Activated naive CD4-positive, alpha-beta T cell treated with anti-CD3 and anti-CD28 coated beads, Interleukin-2, amount 10 ng/mL, durations not matched to agents 7 days and 5 days (primary cell): ENCODE measurements at regions of chr19 and their contacts with region 1.

Region 1: GRCh38 chr19:11035441-11036377 is 53.6 kb upstream of the LDLR start:
- DNase-seq: peak; percentile 93
- H3K4me3 Mint-ChIP-seq: no peak overlapping the region
- H3K27ac Mint-ChIP-seq: peak overlapping the region; percentile 72
- H3K4me1 Mint-ChIP-seq: peaks cover 14% of the 10 kb centered on the region
- H3K27me3 Mint-ChIP-seq: no peaks in the 10 kb centered on the region

Region 2: DNA sequence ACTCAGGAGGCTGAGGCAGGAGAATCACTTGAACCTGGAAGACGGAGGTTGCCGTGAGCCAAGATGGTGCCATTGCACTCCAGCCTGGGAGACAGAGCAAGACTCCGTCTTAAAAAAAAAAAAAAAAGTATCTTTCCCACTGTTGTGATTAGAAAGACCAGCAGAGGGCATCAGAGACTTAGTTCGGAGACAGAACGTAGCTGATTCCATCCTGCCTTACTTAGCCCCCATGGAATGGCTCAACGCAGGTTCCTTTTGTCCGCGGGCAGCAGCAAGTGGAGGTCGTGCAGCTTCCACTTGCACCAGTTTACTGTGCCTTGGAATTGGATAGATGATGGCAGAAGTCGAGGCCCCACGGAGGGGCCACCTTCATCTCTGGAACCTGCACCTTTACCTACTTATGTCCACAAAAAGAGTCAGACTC is 99.0 kb before region 1 on chr19:
- CTCF ChIA-PET with region 1: interaction called, 14 read pairs
- DNase-seq: peak; percentile 49
- H3K4me3 Mint-ChIP-seq: no peak overlapping the region
- H3K27ac Mint-ChIP-seq: no peak overlapping the region
- H3K4me1 Mint-ChIP-seq: peaks cover 16% of the 10 kb centered on the region
- H3K27me3 Mint-ChIP-seq: no peaks in the 10 kb centered on the region

Region 3: DNA sequence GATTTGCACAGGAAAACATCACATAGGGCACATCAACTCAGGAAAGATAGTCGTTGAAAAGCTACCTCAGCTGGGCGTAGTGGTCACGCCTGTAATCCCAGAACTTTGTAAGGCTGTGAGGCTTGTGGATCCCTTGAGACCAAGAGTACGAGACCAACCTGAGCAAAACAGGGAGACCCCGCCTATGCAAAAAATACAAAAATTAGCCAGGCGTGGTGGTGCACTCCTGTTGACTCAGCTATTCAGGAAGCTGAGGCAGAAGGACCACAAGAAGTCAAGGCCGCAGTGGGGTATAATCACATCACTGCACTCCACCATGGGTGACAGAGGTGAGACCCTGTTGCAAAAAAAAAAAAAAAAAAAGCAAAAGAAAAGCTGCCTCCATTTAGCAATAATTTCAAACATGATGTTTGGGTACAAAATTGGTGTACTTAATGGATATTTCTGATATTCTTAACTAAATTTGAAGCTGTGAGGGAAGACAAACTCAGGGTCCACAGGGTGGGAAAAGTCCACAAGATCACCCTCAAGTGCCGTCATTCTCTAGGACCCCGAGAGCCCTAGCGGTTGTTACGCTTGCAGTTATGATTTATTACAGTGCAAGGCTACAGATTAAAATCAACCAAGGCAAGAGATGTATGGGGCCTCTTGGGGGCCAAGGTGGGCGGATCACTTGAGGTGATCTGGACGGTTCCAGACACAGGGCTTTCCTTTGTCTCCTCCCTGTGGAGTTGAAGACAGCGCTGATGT is 11.1 kb after region 1 on chr19:
- CTCF ChIA-PET with region 1: interaction called, 11 read pairs
- DNase-seq: no peak
- H3K4me3 Mint-ChIP-seq: no peak overlapping the region
- H3K27ac Mint-ChIP-seq: peak overlapping the region; percentile 52
- H3K4me1 Mint-ChIP-seq: peaks cover 35% of the 10 kb centered on the region
- H3K27me3 Mint-ChIP-seq: no peaks in the 10 kb centered on the region

Region 4: GRCh38 chr19:11093684-11094238 is 58.1 kb after region 1 on chr19:
- CTCF ChIA-PET with region 1: interaction called, 15 read pairs
- DNase-seq: no peak
- H3K4me3 Mint-ChIP-seq: peak overlapping the region; percentile 93
- H3K27ac Mint-ChIP-seq: peak overlapping the region; percentile 99
- H3K4me1 Mint-ChIP-seq: peaks cover 68% of the 10 kb centered on the region
- H3K27me3 Mint-ChIP-seq: no peaks in the 10 kb centered on the region

Region 5: GRCh38 chr19:11111117-11111774 is 75.5 kb after region 1 on chr19:
- CTCF ChIA-PET with region 1: interaction called, 11 read pairs
- DNase-seq: no peak
- H3K4me3 Mint-ChIP-seq: no peak overlapping the region
- H3K27ac Mint-ChIP-seq: no peak overlapping the region
- H3K4me1 Mint-ChIP-seq: no peaks in the 10 kb centered on the region
- H3K27me3 Mint-ChIP-seq: no peaks in the 10 kb centered on the region

Region 6: DNA sequence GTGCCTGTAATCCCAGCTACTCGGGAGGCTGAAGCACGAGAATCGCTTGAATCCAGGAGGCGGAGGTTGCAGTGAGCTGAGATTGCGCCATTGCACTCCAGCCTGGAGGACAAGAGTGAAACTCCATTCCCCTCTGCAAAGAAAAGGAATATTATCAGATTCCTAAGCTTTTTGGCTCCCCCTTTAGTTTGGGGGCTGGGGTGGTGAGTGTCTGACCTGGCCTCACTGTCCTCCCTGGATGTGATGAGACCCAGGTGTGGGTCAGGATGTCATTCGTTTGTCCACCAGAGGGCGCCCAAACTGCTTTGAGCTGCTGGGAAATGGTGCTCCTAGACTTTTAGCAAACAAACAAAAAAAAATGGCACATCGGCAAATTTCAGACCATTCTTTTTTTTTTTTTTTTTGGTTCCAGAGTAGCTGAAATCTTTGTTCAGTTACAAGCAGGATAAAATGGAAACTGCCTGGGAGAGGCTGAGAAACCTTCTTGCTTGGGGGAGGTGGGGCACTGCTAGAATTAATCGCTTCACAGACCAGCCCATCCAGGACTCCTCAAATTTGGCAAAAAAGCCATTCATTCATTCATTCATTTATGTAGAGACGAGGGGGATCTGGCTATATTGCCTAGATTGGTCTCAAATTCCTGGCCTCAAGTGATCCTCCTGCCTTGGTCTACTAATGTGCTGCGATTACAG is 90.4 kb after region 1 on chr19:
- CTCF ChIA-PET with region 1: interaction called, 40 read pairs
- DNase-seq: peak; percentile 86
- H3K4me3 Mint-ChIP-seq: no peak overlapping the region
- H3K27ac Mint-ChIP-seq: no peak overlapping the region
- H3K4me1 Mint-ChIP-seq: peaks cover 2% of the 10 kb centered on the region
- H3K27me3 Mint-ChIP-seq: no peaks in the 10 kb centered on the region